H1 (cell line): ENCODE measurements at regions of chr21 and their contacts with region 1.

Region 1: GRCh38 chr21:45372732-45373355 is 32.1 kb upstream of the COL18A1 start:
- DNase-seq: no peak
- H3K4me3 ChIP-seq: no peak overlapping the region
- H3K27ac ChIP-seq: no peak overlapping the region
- H3K4me1 ChIP-seq: peaks cover 0 to 7% (median 2%) of the 10 kb centered on the region in 4 experiments
- H3K27me3 ChIP-seq: no peaks in the 10 kb centered on the region; a peak in 2 of 7 replicates
- CTCF ChIP-seq: no peak
- EP300 ChIP-seq: no peak
- POLR2A ChIP-seq: no peak
- RAD21 ChIP-seq: no peak

Region 2: DNA sequence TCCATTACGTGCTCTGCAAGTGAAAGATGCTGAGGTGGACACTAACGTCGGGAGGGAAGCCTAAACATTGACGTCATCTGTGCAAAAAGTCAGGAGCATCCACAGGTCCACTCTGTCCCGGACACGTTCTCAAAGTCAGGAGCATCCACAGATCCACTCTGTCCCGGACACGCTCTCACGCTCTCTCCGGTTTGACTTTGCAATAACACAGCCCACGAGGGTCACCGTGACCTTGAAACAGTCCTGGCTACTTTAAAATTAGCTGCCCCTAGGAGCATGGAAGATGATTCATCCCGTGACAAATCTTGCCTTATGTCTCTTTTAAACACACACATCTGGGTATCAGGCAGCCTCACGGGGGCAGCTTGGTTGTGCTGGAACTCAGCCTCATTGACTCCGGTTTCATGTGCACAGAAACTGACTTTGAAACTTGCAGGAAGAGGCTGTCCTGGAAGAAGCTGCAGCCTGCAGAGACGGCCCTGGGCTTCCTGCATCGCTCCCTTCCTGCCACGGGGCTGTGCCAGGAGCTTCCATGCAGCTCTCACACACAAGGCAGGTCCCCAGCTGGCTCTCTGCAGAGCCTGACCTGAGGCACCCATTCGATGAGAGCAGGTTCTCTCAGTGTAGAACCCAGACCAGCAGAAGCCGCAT is 14.0 kb after region 1 on chr21:
- CTCF ChIA-PET with region 1: interaction called, 10 read pairs
- POLR2A ChIA-PET with region 1: no interaction called
- DNase-seq: no peak
- H3K4me3 ChIP-seq: no peak overlapping the region
- H3K27ac ChIP-seq: no peak overlapping the region
- H3K4me1 ChIP-seq: peaks cover 0 to 3% (median 0%) of the 10 kb centered on the region in 4 experiments; a peak in 5 of 7 replicates
- H3K27me3 ChIP-seq: 0 out of 7 replicates have a peak, but pooled peaks cover 0 to 2% (median 0%) of the 10 kb centered on the region in 4 experiments
- CTCF ChIP-seq: no peak
- EP300 ChIP-seq: no peak
- POLR2A ChIP-seq: no peak
- RAD21 ChIP-seq: no peak; a peak in 1 of 4 replicates